Activated CD8-positive, alpha-beta T cell treated with anti-CD3 and anti-CD28 coated beads for 36 hours (primary cell): ENCODE measurements at regions of chr17 and their contacts with region 1.

Region 1: GRCh38 chr17:75864448-75864871 is 9.3 kb upstream of the WBP2 start:
- DNase-seq: peak; percentile 71
- ATAC-seq: peak; percentile 78
- H3K4me3 Mint-ChIP-seq: no peak overlapping the region
- H3K27ac Mint-ChIP-seq: peak overlapping the region; percentile 78
- H3K4me1 Mint-ChIP-seq: peaks cover 17% of the 10 kb centered on the region
- H3K27me3 Mint-ChIP-seq: no peaks in the 10 kb centered on the region
- CTCF ChIP-seq: no peak

Region 2: DNA sequence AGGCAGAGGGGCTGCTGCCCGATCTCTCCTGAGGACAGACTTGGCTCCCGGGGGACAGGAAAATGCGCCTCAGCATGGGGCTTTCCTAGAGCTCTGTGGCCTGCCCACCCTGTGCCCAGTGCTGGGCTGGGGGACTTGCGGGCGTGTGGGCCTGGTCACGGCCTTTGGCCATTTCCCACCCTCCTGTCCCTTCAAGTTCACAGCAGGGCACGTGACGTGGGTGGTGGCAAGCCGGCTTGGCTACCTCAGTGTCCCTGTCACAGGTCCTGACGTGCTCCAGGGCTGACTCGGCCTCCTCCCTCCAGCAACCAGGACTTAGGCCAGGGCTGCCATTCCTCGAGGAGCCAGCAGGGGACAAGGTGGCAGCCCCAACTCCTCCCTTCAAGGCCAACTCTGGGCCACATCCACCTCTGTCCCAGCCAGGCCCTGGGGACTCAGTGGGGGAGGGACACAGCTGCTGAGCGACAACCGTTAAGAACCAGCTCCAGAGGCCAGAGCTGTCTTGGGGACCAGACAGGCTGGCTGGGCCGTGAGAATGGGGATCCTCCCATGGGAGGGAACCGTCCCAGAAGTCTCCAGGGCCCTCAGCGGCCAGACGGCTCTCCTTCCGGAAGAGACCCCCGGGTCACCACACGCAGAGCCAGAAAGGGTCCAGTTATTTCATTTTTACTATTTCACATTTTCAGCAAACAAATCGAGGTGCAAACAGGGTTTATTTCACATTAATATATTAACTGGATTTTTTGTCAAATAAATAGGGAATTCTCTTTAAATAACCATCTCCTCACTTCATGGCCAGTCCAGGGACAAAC is 19.2 kb before region 1 on chr17:
- CTCF ChIA-PET with region 1: interaction called, 47 read pairs
- POLR2A ChIA-PET with region 1: no interaction called
- intact Hi-C with region 1: no loop called
- DNase-seq: peak; percentile 83
- ATAC-seq: peak; percentile 72
- H3K4me3 Mint-ChIP-seq: peak overlapping the region; percentile 96
- H3K27ac Mint-ChIP-seq: peak overlapping the region; percentile 75
- H3K4me1 Mint-ChIP-seq: peaks cover 30% of the 10 kb centered on the region
- H3K27me3 Mint-ChIP-seq: no peaks in the 10 kb centered on the region
- CTCF ChIP-seq: peak; percentile 72

Region 3: GRCh38 chr17:75896415-75897159 is 32.1 kb after region 1 on chr17 and contains the start of gene TRIM65:
- CTCF ChIA-PET with region 1: interaction called, 11 read pairs
- POLR2A ChIA-PET with region 1: interaction called, 4 read pairs
- intact Hi-C with region 1: no loop called
- DNase-seq: peak; percentile 85
- ATAC-seq: peak; percentile 88
- H3K4me3 Mint-ChIP-seq: peak within 1 kb of the TSS; percentile 87
- H3K27ac Mint-ChIP-seq: peak within 1 kb of the TSS; percentile 88
- H3K4me1 Mint-ChIP-seq: peaks cover 21% of the 10 kb centered on the region
- H3K27me3 Mint-ChIP-seq: no peaks in the 10 kb centered on the region
- CTCF ChIP-seq: peak; percentile 17
- total RNA-seq, gene TRIM65: 37.1 to 42.2 TPM

Region 4: GRCh38 chr17:76053246-76054116 is 189.0 kb after region 1 on chr17:
- CTCF ChIA-PET with region 1: no interaction called
- POLR2A ChIA-PET with region 1: no interaction called
- intact Hi-C with region 1: no loop called
- DNase-seq: peak; percentile 67
- ATAC-seq: peak; percentile 65
- H3K4me3 Mint-ChIP-seq: no peak overlapping the region
- H3K27ac Mint-ChIP-seq: peak overlapping the region; percentile 77
- H3K4me1 Mint-ChIP-seq: peaks cover 19% of the 10 kb centered on the region
- H3K27me3 Mint-ChIP-seq: no peaks in the 10 kb centered on the region
- CTCF ChIP-seq: no peak